Natural killer cell (primary cell): ENCODE measurements at regions of chr11 and their contacts with region 1.

Region 1: GRCh38 chr11:107549253-107549953 is 16.1 kb downstream of the ALKBH8 start:
- DNase-seq: peak in 1 of 2 donors; percentile 73
- ATAC-seq: peak in 2 of 3 donors; percentile 60 to 68
- H3K4me3 ChIP-seq: no peak overlapping the region
- H3K4me3 Mint-ChIP-seq: no peak overlapping the region
- H3K27ac ChIP-seq: no peak overlapping the region
- H3K27ac Mint-ChIP-seq: no peak overlapping the region
- H3K4me1 ChIP-seq: no peaks in the 10 kb centered on the region
- H3K4me1 Mint-ChIP-seq: no peaks in the 10 kb centered on the region
- H3K27me3 ChIP-seq: no peaks in the 10 kb centered on the region
- H3K27me3 Mint-ChIP-seq: no peaks in the 10 kb centered on the region
- CTCF ChIP-seq: peak; percentile 92

Region 2: GRCh38 chr11:107565219-107565937 is 16.0 kb after region 1 on chr11 and contains the start of gene ALKBH8:
- intact Hi-C with region 1: loop called (anchors 2 kb)
- DNase-seq: peak; percentile 68 to 88
- ATAC-seq: peak; percentile 93 to 94 (median 93)
- H3K4me3 ChIP-seq: peak within 1 kb of the TSS; percentile 70
- H3K4me3 Mint-ChIP-seq: peak within 1 kb of the TSS; percentile 94
- H3K27ac ChIP-seq: peak within 1 kb of the TSS; percentile 75
- H3K27ac Mint-ChIP-seq: peak within 1 kb of the TSS; percentile 91 to 93
- H3K4me1 ChIP-seq: peaks cover 19% of the 10 kb centered on the region
- H3K4me1 Mint-ChIP-seq: peaks cover 27 to 39% of the 10 kb centered on the region in 2 donors
- H3K27me3 ChIP-seq: no peaks in the 10 kb centered on the region
- H3K27me3 Mint-ChIP-seq: peaks cover 4 to 6% of the 10 kb centered on the region in 2 donors
- CTCF ChIP-seq: no peak
- total RNA-seq, gene ALKBH8: 6.9 to 11.8 (median 9.0) TPM

Region 3: GRCh38 chr11:107581147-107581546 is 31.7 kb after region 1 on chr11:
- intact Hi-C with region 1: no loop called
- DNase-seq: no peak
- ATAC-seq: no peak
- H3K4me3 ChIP-seq: no peak overlapping the region
- H3K4me3 Mint-ChIP-seq: no peak overlapping the region
- H3K27ac ChIP-seq: no peak overlapping the region
- H3K27ac Mint-ChIP-seq: no peak overlapping the region
- H3K4me1 ChIP-seq: no peaks in the 10 kb centered on the region
- H3K4me1 Mint-ChIP-seq: no peaks in the 10 kb centered on the region
- H3K27me3 ChIP-seq: peaks cover 4% of the 10 kb centered on the region
- H3K27me3 Mint-ChIP-seq: peaks cover 16 to 45% of the 10 kb centered on the region in 2 donors
- CTCF ChIP-seq: no peak

Region 4: GRCh38 chr11:107689317-107690202 is 140.2 kb after region 1 on chr11:
- intact Hi-C with region 1: loop called (anchors 1 kb)
- DNase-seq: peak in 1 of 2 donors; percentile 67
- ATAC-seq: peak in 2 of 3 donors; percentile 44 to 60
- H3K4me3 ChIP-seq: no peak overlapping the region
- H3K4me3 Mint-ChIP-seq: no peak overlapping the region
- H3K27ac ChIP-seq: no peak overlapping the region
- H3K27ac Mint-ChIP-seq: no peak overlapping the region
- H3K4me1 ChIP-seq: no peaks in the 10 kb centered on the region
- H3K4me1 Mint-ChIP-seq: peaks cover 0 to 5% of the 10 kb centered on the region in 2 donors
- H3K27me3 ChIP-seq: peaks cover 2% of the 10 kb centered on the region
- H3K27me3 Mint-ChIP-seq: peaks cover 7 to 14% of the 10 kb centered on the region in 2 donors
- CTCF ChIP-seq: no peak